ENCODE measurements at regions of chr2 and their contacts with region 1.

Region 1: DNA sequence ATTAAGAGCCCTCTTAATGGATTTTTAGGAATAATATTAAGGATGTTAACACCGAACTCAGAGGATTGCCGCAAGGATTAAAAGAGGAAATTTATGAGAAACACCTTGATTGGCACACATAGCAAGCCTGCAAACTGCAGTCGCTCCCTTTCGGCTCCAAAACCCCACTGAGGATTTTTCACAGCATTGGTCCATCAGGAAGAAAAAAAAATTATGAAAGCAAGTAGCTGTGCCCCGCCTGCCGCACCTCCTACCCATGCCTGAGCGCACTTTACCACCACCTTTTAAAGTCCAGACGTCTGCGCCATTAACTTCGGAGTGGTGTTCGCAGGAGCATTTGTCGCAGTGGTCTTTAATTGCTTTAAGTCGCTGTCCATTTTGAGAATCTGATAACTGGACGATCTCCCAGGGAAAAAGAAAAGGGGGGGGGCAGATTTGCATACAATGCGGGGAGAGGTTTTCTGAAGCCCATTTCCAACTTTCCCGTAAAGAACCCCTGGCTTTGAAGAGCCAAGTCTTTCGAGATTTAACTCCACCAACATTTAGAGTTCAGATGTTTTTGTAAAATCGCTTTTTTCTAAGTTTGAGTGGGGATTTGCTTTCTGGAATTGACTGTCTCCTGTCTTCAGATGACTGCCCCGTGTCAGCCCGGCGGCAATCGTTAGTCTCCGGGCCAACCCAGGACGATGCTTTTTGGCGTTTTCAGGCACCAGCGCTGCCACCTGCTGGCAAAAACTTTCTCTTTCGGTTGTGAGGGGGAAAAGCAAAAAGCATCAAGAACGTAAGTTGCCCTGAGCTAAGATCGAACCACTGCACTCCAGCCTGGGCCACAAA is 914 bp upstream of the TRABD2A start:
- DNase-seq: peak; percentile 79 to 92 (median 86)
- ATAC-seq: peak; percentile 66
- H3K4me3 ChIP-seq: peak overlapping the region; percentile 91
- H3K4me3 Mint-ChIP-seq: peak overlapping the region; percentile 98
- H3K27ac ChIP-seq: peak overlapping the region; percentile 64 to 79
- H3K27ac Mint-ChIP-seq: peak overlapping the region; percentile 92
- H3K4me1 ChIP-seq: peaks cover 35% of the 10 kb centered on the region
- H3K4me1 Mint-ChIP-seq: peaks cover 55% of the 10 kb centered on the region
- H3K27me3 ChIP-seq: no peaks in the 10 kb centered on the region
- H3K27me3 Mint-ChIP-seq: no peaks in the 10 kb centered on the region
- CTCF ChIP-seq: peak; percentile 79

Region 2: DNA sequence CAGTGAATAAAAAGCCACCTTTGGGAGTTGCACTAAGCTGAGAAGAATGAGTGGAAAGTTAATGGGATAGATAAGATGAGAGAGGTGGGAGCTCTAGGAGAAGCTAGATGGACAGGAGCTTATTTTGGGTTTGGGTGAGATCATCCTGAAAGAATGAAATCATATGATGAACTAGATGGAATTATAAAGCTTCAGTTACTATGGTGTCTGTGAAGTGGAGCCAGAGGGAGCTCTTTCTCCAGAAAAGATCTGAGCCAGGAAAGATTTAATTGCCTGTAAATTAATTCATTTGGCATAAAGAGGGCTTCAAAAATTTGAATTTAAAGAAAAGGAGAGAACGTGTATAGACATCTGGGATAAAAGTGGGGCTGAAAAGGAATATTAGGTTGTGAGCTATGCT is 355.2 kb before region 1 on chr2:
- CTCF ChIA-PET with region 1: no interaction called
- POLR2A ChIA-PET with region 1: interaction called, 10 read pairs
- intact Hi-C with region 1: no loop called
- DNase-seq: peak in 3 of 14 experiments; percentile 22 to 39 (median 30)
- ATAC-seq: no peak
- H3K4me3 ChIP-seq: no peak overlapping the region
- H3K4me3 Mint-ChIP-seq: no peak overlapping the region
- H3K27ac ChIP-seq: no peak overlapping the region
- H3K27ac Mint-ChIP-seq: no peak overlapping the region
- H3K4me1 ChIP-seq: no peaks in the 10 kb centered on the region
- H3K4me1 Mint-ChIP-seq: peaks cover 20% of the 10 kb centered on the region
- H3K27me3 ChIP-seq: no peaks in the 10 kb centered on the region
- H3K27me3 Mint-ChIP-seq: no peaks in the 10 kb centered on the region
- CTCF ChIP-seq: peak; percentile 56

Region 3: GRCh38 chr2:84741296-84741765 is 140.5 kb before region 1 on chr2:
- CTCF ChIA-PET with region 1: no interaction called
- POLR2A ChIA-PET with region 1: interaction called, 15 read pairs
- intact Hi-C with region 1: no loop called
- DNase-seq: peak; percentile 7 to 85 (median 27)
- ATAC-seq: peak; percentile 91
- H3K4me3 ChIP-seq: no peak overlapping the region
- H3K4me3 Mint-ChIP-seq: no peak overlapping the region
- H3K27ac ChIP-seq: no peak overlapping the region
- H3K27ac Mint-ChIP-seq: peak overlapping the region; percentile 16
- H3K4me1 ChIP-seq: peaks cover 17% of the 10 kb centered on the region
- H3K4me1 Mint-ChIP-seq: peaks cover 56% of the 10 kb centered on the region
- H3K27me3 ChIP-seq: no peaks in the 10 kb centered on the region
- H3K27me3 Mint-ChIP-seq: no peaks in the 10 kb centered on the region
- CTCF ChIP-seq: peak; percentile 52

Region 4: DNA sequence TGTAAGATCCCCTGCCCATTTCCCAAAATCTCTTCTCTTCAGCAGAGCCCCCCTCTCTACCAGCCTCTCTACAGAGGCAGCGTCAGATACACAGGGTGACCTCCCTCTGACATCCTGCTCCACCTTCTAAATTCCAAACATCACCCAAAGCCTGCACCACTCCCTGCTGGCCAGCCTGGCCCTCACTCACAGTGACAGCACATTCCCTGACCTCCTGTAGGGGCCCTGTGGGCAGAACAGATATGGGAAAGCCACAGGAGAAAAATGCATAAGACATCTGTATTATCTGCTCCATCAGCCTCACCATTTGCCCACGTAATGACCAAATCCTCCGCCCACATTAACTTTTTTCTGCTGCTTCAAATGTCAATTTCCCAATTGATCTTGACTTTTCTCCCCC is 41.5 kb before region 1 on chr2:
- CTCF ChIA-PET with region 1: interaction called, 4 read pairs
- POLR2A ChIA-PET with region 1: interaction called, 138 read pairs
- intact Hi-C with region 1: no loop called
- DNase-seq: peak in 1 of 14 experiments; percentile 59
- ATAC-seq: peak; percentile 28
- H3K4me3 ChIP-seq: peak overlapping the region; percentile 22
- H3K4me3 Mint-ChIP-seq: peak overlapping the region; percentile 80
- H3K27ac ChIP-seq: peak overlapping the region; percentile 81 to 90
- H3K27ac Mint-ChIP-seq: peak overlapping the region; percentile 96
- H3K4me1 ChIP-seq: peaks cover 73% of the 10 kb centered on the region
- H3K4me1 Mint-ChIP-seq: peaks cover 91% of the 10 kb centered on the region
- H3K27me3 ChIP-seq: no peaks in the 10 kb centered on the region
- H3K27me3 Mint-ChIP-seq: no peaks in the 10 kb centered on the region
- CTCF ChIP-seq: no peak

Region 5: DNA sequence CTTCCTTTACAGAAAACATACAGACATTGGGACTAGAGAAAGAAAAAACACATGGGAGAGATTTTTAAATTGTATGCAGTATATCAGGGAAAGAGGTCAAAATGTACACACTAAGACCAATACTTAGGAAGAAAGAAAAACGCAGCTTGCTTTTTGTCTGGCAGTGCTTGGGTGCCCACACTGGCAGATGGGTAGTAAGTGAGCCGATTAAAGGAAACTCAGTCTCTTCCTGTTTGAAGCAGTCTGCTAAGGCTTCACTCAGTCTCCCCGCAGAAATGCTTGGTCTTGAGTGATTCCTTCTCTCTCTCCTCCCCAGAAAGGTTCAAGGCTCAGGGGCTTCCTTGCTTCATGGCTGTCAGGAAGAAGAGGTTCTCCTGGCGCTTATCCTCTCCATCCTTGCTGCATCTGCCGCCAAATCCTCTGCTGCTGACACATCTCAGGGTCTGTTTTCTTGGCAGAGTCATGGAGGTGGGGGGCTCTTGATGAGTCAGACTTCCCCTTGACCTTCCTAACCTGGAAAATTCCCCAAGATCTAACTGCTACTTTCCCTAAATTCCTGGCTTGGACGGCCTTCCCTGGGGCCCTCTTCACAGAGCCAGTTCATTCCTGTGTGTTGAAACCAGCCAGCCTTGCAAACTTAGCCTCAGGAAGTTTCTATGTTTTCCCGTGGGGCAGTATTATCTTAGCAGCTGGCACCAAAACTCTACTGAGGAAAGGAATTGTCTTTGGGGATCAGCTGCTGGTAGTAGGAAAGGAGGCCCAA is 13.1 kb after region 1 on chr2:
- CTCF ChIA-PET with region 1: interaction called, 16 read pairs
- POLR2A ChIA-PET with region 1: interaction called, 19 read pairs
- intact Hi-C with region 1: loop called in 1 of 2 experiments (anchors 2 kb)
- DNase-seq: peak in 4 of 14 experiments; percentile 57 to 64 (median 60)
- ATAC-seq: peak; percentile 74
- H3K4me3 ChIP-seq: peak overlapping the region; percentile 27
- H3K4me3 Mint-ChIP-seq: peak overlapping the region; percentile 16
- H3K27ac ChIP-seq: peak overlapping the region; percentile 59 to 76
- H3K27ac Mint-ChIP-seq: peak overlapping the region; percentile 66
- H3K4me1 ChIP-seq: peaks cover 45% of the 10 kb centered on the region
- H3K4me1 Mint-ChIP-seq: peaks cover 62% of the 10 kb centered on the region
- H3K27me3 ChIP-seq: no peaks in the 10 kb centered on the region
- H3K27me3 Mint-ChIP-seq: no peaks in the 10 kb centered on the region
- CTCF ChIP-seq: no peak